OCI-LY7 (cell line): ENCODE measurements at regions of chr6 and their contacts with region 1.

Region 1: GRCh38 chr6:71510057-71510713 is 221.6 kb downstream of the OGFRL1 start:
- DNase-seq: peak; percentile 65
- H3K4me3 ChIP-seq: no peak overlapping the region
- H3K27ac ChIP-seq: no peak overlapping the region
- H3K4me1 ChIP-seq: no peaks in the 10 kb centered on the region
- CTCF ChIP-seq: peak; percentile 77

Region 2: DNA sequence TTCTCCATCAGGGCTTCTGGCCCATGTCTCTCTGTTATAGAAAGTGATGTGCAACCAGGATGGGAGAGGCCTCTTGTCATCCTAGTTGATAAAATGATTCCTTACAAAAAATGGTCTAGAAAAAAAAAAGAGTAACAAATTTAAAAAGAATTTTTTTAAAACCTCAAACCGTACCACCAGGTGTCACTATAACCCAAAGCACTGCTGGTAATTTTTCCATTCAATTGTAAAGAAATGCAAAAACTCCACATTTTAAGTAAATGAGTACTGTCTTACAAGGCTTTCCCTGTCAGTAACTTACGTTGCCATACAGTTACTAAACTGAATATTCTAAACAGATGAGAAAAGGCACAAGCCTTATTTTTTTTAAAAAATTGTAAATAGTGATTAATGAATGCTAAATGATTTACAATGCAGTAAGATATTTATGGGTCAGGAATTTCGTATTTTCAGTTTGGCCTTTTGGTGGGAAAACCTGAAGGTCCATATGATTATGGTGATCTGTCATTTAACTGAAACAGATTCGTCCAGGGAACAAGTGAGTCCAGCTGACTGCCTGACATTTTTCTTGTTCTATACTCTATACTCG is 126.2 kb before region 1 on chr6:
- CTCF ChIA-PET with region 1: no interaction called
- POLR2A ChIA-PET with region 1: no interaction called
- intact Hi-C with region 1: loop called (anchors 2 kb)
- DNase-seq: peak; percentile 60
- H3K4me3 ChIP-seq: no peak overlapping the region
- H3K27ac ChIP-seq: no peak overlapping the region
- H3K4me1 ChIP-seq: no peaks in the 10 kb centered on the region
- CTCF ChIP-seq: peak; percentile 93